RWPE1 (cell line): ENCODE measurements at regions of chr1 and their contacts with region 1.

Region 1: DNA sequence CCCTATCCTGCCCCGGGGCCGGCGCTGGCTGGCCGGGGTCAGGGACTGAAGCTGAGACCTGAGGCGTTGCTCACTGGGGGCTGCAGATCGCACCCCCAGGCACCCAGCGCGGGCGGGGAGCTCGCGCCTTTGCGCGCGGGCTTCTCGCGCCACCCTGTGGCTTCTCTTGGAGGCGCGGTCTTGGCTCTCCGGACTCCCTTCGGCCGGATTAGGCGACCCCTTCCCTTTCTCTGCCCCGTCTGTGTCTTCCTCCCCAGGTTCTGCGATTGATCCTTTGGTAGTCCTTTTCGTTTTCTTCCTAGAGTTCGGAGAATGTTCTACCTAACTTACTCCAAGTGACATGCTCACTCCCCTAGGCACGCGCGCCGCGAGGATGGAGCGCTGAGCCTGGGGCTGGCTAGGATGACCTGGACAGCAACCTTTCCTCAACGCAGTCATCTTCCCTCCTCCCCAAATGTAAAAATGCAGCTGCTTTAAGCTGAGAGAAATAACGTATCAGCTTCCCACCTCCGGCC is 495 bp upstream of the NTRK1 start:
- DNase-seq: peak; percentile 62
- H3K27ac ChIP-seq: no peak overlapping the region
- CTCF ChIP-seq: peak; percentile 91

Region 2: DNA sequence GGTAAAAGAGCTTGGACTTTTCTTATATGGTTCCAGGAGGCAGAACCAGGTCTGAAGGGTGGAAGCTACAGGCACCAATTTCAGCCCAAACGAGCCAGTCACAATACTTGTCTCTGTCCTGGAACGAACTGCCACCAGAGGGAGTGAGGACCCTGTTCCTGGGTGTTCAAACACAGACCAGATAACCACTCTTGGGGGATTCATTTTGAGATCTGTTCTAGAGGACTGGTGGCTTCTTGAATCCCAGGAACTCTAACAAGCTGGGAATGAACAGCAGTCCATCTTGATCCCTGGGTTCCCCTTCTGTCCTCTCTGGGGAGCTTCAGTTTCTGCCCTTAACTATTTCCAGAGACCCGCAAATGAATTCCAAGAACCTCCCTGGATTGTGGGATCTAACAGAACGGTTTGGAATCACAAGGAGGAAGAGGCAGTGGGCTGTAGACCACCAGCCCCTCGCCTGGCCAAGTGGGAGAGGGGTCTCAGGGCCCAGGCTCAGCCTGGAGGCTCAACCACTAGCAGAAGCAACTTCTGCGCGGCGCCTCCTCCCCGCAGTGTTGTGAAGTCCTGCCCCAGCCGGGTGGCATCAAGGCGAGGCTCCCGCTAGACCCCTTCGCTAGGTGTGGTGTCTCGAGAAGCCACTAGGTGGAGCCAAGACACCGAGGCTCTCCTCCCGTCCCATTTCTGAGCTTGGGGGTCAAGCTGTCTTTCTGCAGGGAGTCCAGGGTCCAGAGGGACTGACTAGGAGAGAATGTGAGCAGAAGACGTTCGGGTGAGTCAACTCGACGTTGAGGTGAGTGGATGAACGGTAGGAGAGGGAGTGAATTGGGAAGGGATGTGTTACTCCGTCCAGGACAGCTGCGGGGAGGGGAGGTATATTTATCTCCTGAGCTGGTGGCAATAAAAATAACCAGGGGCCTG is 170.9 kb before region 1 on chr1:
- CTCF ChIA-PET with region 1: interaction called, 19 read pairs
- POLR2A ChIA-PET with region 1: no interaction called
- DNase-seq: peak; percentile 83
- H3K27ac ChIP-seq: peak overlapping the region; percentile 82
- CTCF ChIP-seq: peak; percentile 88

Region 3: DNA sequence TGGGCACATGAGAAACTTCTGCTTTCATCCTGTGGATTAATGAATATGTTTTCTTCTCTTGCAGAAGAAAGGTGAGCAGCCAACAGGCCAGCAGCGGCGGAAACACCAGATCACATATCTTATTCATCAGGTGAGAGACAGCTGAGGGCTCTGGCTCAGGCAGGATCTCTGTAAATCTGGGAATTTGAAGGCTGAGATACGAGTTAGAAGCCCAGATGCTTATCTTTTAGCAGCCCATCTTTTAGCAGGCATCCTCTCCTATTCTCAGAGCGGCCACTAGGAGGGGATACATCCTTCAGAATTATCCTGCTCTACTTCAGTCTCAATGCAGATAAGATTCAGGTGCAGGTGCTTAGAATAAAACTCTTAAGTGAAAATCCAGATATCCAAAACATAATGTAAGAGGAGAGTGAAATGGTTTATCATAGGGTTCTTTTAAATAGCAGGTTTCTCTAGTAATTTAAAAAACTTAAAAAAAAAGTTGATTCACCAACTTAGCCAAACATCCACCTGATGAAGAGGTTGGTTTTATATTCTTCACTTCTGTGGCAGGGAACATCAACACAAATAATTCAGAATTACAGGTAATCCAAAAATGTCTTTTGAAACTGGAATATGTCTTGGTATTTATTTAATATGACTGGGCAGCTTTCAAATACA is 62.8 kb before region 1 on chr1:
- CTCF ChIA-PET with region 1: interaction called, 29 read pairs
- POLR2A ChIA-PET with region 1: interaction called, 3 read pairs
- DNase-seq: peak; percentile 67
- H3K27ac ChIP-seq: no peak overlapping the region
- CTCF ChIP-seq: peak; percentile 81

Region 4: GRCh38 chr1:156838981-156839410 is 21.2 kb before region 1 on chr1:
- CTCF ChIA-PET with region 1: interaction called, 53 read pairs
- POLR2A ChIA-PET with region 1: no interaction called
- DNase-seq: no peak
- H3K27ac ChIP-seq: no peak overlapping the region
- CTCF ChIP-seq: peak; percentile 83

Region 5: DNA sequence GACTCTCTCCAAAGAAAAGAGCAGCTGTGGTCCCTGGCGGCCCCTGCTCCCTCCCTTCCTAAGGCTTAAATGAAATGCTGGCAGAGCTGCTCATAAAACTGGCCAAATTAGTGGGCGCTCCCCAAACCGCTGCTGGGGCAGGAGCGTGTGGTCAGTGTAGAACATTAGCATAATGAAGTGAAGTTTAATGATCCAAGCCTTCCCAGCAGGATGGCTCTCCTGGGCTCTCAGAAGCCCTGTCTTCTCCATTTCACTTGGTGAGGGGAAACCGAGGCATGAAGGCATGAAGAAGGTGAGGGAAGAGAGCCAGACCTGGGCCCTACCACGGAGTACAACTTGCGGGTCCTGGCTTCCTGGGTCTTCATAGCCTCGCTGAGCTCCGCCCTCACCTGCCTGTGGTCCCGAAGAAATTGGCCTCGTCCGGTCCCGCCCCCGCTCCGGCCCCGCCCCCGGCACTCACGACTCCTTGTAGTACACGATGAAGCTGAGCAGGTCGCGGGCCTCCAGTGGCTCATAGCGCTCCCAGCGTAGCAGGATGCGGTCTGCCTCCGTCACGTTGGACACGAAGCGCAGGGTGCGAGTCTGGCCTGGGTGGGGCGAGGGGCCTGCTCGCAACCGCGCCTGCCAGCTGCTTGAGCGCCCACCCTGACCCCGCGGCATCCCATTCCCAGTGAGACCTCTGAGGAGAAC is 11.6 kb before region 1 on chr1:
- CTCF ChIA-PET with region 1: interaction called, 14 read pairs
- POLR2A ChIA-PET with region 1: no interaction called
- DNase-seq: no peak
- H3K27ac ChIP-seq: no peak overlapping the region
- CTCF ChIP-seq: no peak

Region 6: GRCh38 chr1:156876281-156876680 is 16.1 kb after region 1 on chr1:
- CTCF ChIA-PET with region 1: interaction called, 10 read pairs
- POLR2A ChIA-PET with region 1: no interaction called
- DNase-seq: no peak
- H3K27ac ChIP-seq: no peak overlapping the region
- CTCF ChIP-seq: no peak

Region 7: GRCh38 chr1:156927215-156928042 is 67.3 kb after region 1 on chr1:
- CTCF ChIA-PET with region 1: interaction called, 25 read pairs
- POLR2A ChIA-PET with region 1: no interaction called
- DNase-seq: peak; percentile 75
- H3K27ac ChIP-seq: no peak overlapping the region
- CTCF ChIP-seq: peak; percentile 87

Region 8: GRCh38 chr1:156961709-156962108 is 101.5 kb after region 1 on chr1:
- CTCF ChIA-PET with region 1: no interaction called
- POLR2A ChIA-PET with region 1: no interaction called
- DNase-seq: peak; percentile 22
- H3K27ac ChIP-seq: no peak overlapping the region
- CTCF ChIP-seq: no peak

Region 9: DNA sequence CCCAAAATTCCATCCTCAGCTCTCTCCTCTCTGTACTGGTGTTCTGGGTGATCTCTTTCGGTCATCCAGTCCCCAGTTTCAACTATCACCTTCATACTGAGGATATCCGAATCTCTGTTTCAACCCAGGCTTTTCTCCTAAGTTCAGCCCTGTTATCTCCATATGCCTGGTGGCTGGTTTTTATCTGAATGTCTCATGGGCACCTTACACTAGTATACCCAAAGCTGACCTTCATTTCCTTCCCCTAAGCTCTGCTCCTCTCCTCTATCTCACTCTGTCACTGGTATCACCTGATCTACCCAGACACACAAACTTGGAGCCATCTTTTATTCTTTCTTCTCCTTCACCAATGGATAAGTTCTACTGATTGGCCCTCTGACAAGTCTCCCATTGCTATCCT is 113.2 kb after region 1 on chr1:
- CTCF ChIA-PET with region 1: no interaction called
- POLR2A ChIA-PET with region 1: no interaction called
- DNase-seq: no peak
- H3K27ac ChIP-seq: no peak overlapping the region
- CTCF ChIP-seq: no peak